ENCODE measurements at regions of chr12 and their contacts with region 1.

Region 1: GRCh38 chr12:25436203-25437030 is 116.7 kb downstream of the LMNTD1 start:
- DNase-seq: no peak
- H3K4me3 ChIP-seq: peak overlapping the region; percentile 47 to 54
- H3K27ac ChIP-seq: no peak overlapping the region
- H3K4me1 ChIP-seq: no peaks in the 10 kb centered on the region
- H3K27me3 ChIP-seq: no peaks in the 10 kb centered on the region
- CTCF ChIP-seq: peak; percentile 55 to 84 (median 74)

Region 2: GRCh38 chr12:26028953-26029735 is 592.7 kb after region 1 on chr12:
- intact Hi-C with region 1: loop called (anchors 2 kb)
- DNase-seq: no peak
- H3K4me3 ChIP-seq: peak overlapping the region in 1 of 2 donors; percentile 6
- H3K27ac ChIP-seq: peak overlapping the region in 1 of 2 donors; percentile 32
- H3K4me1 ChIP-seq: peaks cover 0 to 49% of the 10 kb centered on the region in 2 donors
- H3K27me3 ChIP-seq: no peaks in the 10 kb centered on the region
- CTCF ChIP-seq: peak; percentile 47 to 76 (median 70)

Region 3: DNA sequence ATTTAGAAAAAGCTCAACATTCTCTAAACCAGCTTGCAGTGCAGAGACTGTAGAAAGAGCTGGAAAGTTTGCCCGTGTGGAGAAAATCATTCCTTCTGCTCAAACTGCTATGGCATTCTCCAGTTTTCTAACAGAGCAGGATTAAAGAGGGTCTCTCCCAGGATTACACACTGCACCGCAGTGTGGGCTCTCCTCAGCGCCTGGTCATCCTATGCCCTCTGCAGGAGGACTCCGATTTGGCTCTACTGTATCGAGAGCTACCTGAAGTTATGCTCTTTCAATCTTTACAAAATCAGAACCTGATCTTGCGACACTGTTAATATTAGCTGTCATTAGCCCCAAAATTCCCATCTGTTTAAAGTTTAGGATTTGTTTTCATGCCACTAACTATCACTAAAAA is 655.4 kb after region 1 on chr12:
- intact Hi-C with region 1: loop called (anchors 5 kb)
- DNase-seq: no peak
- H3K4me3 ChIP-seq: no peak overlapping the region
- H3K27ac ChIP-seq: no peak overlapping the region
- H3K4me1 ChIP-seq: no peaks in the 10 kb centered on the region
- H3K27me3 ChIP-seq: no peaks in the 10 kb centered on the region
- CTCF ChIP-seq: peak in 1 of 3 experiments; percentile 20

Measured in ascending aorta (tissue), 2 donors.